ENCODE measurements at regions of chr4 and their contacts with region 1.

Region 1: GRCh38 chr4:98467627-98468072 is 190.8 kb downstream of the TSPAN5 start:
- DNase-seq: peak; percentile 83 to 91 (median 91)
- H3K4me3 ChIP-seq: peak overlapping the region; percentile 11 to 78 (median 59)
- H3K27ac ChIP-seq: no peak overlapping the region
- H3K4me1 ChIP-seq: peaks cover 0 to 13% (median 11%) of the 10 kb centered on the region in 4 experiments
- H3K27me3 ChIP-seq: no peaks in the 10 kb centered on the region

Region 2: GRCh38 chr4:98446499-98447375 is 20.9 kb before region 1 on chr4:
- CTCF ChIA-PET with region 1: interaction called, 14 read pairs
- POLR2A ChIA-PET with region 1: no interaction called
- DNase-seq: peak; percentile 78 to 99 (median 97)
- H3K4me3 ChIP-seq: peak overlapping the region in 5 of 7 experiments; percentile 32 to 60 (median 43)
- H3K27ac ChIP-seq: peak overlapping the region; percentile 77 to 85
- H3K4me1 ChIP-seq: peaks cover 27 to 40% (median 35%) of the 10 kb centered on the region in 4 experiments
- H3K27me3 ChIP-seq: no peaks in the 10 kb centered on the region

Region 3: GRCh38 chr4:98601708-98602107 is 134.1 kb after region 1 on chr4:
- CTCF ChIA-PET with region 1: no interaction called
- POLR2A ChIA-PET with region 1: no interaction called
- DNase-seq: no peak
- H3K4me3 ChIP-seq: no peak overlapping the region
- H3K27ac ChIP-seq: no peak overlapping the region
- H3K4me1 ChIP-seq: no peaks in the 10 kb centered on the region
- H3K27me3 ChIP-seq: no peaks in the 10 kb centered on the region

Region 4: GRCh38 chr4:99264927-99265326 is 797.3 kb after region 1 on chr4:
- CTCF ChIA-PET with region 1: no interaction called
- POLR2A ChIA-PET with region 1: no interaction called
- DNase-seq: no peak
- H3K4me3 ChIP-seq: no peak overlapping the region
- H3K27ac ChIP-seq: no peak overlapping the region
- H3K4me1 ChIP-seq: no peaks in the 10 kb centered on the region
- H3K27me3 ChIP-seq: no peaks in the 10 kb centered on the region